ENCODE measurements at regions of chr6 and their contacts with region 1.

Region 1: GRCh38 chr6:157667211-157668008 is 155.6 kb upstream of the SNX9 start:
- DNase-seq: peak in 3 of 5 donors; percentile 77 to 91 (median 89)
- H3K4me3 ChIP-seq: no peak overlapping the region
- H3K27ac ChIP-seq: no peak overlapping the region
- H3K4me1 ChIP-seq: peaks cover 0 to 4% (median 0%) of the 10 kb centered on the region in 3 donors
- H3K27me3 ChIP-seq: no peaks in the 10 kb centered on the region
- CTCF ChIP-seq: peak; percentile 91

Region 2: DNA sequence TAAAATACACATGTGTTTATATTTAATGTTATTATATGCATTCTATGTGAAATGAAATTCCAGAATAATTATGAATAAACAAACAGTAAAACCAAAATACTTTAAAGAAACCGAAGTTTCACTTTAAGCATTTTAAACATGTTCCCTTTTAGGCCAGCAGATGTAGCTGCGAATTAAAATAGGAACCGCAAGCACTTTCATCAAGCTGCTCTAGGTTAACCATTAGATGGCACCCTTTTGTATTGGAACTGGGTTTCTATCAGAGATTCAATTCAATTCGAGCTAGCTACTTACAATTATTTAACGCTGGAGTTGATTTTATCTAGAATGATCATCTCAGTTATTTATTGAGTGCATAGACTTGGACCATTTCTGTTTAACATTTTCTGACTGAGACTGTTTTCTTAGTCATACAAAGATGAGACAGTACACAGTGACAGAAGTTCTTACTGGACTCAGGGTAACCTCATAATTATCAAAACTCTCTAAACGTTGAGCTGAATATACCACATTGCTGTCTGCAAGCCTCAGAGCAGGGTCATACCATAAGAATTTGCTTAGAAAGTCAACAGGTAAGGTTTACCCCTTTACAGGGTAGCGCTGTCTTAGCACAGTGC is 352.6 kb before region 1 on chr6:
- intact Hi-C with region 1: loop called (anchors 10 kb)
- DNase-seq: peak in 2 of 5 donors; percentile 72 to 85
- H3K4me3 ChIP-seq: no peak overlapping the region
- H3K27ac ChIP-seq: no peak overlapping the region
- H3K4me1 ChIP-seq: no peaks in the 10 kb centered on the region
- H3K27me3 ChIP-seq: no peaks in the 10 kb centered on the region
- CTCF ChIP-seq: peak; percentile 95

Region 3: DNA sequence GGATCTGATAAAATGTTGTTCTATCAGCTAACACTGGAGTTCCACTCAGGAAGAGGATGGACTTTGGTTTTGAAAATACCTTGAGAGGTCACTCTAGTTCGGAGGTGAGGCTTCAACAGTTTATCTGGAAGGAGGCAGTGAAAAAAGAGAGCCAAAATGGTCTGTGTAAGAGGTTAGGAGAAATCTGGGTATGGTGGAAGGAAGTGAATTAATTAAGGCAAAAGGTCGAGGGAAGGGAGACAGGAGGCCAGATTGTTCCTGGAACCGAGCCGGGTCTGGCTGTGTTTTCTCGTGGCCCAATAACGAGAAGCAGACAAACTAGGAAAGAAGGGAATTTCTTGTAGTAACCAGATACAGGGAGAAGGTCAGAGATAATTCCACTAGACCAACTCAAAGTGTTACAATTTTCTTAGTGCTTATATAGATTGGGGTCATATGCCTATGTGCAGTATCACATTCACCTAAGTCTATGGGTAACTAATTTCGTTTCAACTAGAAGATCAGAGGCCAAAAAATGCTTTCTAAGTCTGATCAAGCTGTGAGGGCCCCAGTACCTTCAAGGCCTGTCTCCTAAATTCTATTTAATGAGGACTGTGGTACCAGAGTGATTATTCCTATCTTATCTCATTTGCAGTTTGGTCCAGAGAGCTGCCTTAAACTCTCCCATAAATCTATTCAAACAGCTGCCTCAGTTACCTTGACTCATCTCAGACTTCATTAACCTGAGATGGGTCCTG is 59.6 kb after region 1 on chr6:
- intact Hi-C with region 1: no loop called
- DNase-seq: peak in 1 of 5 donors; percentile 31
- H3K4me3 ChIP-seq: no peak overlapping the region
- H3K27ac ChIP-seq: peak overlapping the region in 1 of 2 donors; percentile 87
- H3K4me1 ChIP-seq: peaks cover 0 to 26% (median 14%) of the 10 kb centered on the region in 3 donors
- H3K27me3 ChIP-seq: no peaks in the 10 kb centered on the region
- CTCF ChIP-seq: no peak

Measured in kidney (tissue), 22 donors.